ENCODE measurements at regions of chr2 and their contacts with region 1.

Region 1: DNA sequence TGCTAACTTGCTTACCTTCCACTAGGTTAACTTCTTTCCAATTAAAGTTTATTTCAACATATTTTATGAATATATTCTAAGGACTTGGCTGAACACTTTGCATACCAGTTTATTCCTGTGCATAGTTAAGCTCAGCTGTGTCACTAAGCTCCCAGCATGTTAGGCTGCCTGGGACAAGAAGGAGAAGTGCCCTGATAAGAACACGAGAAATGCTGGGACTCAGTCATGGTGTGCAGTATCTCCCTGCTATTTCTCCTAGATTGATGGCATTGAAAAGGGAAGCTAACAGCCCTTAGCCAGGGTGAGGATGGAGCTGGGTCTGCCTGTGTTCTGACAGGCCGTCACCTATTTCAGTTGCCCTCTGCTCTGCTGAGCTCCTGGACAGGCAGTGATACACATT is 164.3 kb downstream of the TRABD2A start:
- DNase-seq: no peak
- ATAC-seq: no peak
- H3K4me3 ChIP-seq: no peak overlapping the region
- H3K4me3 Mint-ChIP-seq: no peak overlapping the region
- H3K27ac ChIP-seq: no peak overlapping the region
- H3K27ac Mint-ChIP-seq: peak overlapping the region; percentile 68
- H3K4me1 ChIP-seq: peaks cover 23% of the 10 kb centered on the region
- H3K4me1 Mint-ChIP-seq: peaks cover 35% of the 10 kb centered on the region
- H3K27me3 ChIP-seq: no peaks in the 10 kb centered on the region
- H3K27me3 Mint-ChIP-seq: no peaks in the 10 kb centered on the region
- CTCF ChIP-seq: no peak

Region 2: GRCh38 chr2:84676295-84676694 is 40.3 kb before region 1 on chr2:
- CTCF ChIA-PET with region 1: interaction called, 3 read pairs
- POLR2A ChIA-PET with region 1: no interaction called
- intact Hi-C with region 1: loop called in 1 of 2 experiments (anchors 5 kb)
- DNase-seq: no peak
- ATAC-seq: no peak
- H3K4me3 ChIP-seq: no peak overlapping the region
- H3K4me3 Mint-ChIP-seq: no peak overlapping the region
- H3K27ac ChIP-seq: no peak overlapping the region
- H3K27ac Mint-ChIP-seq: no peak overlapping the region
- H3K4me1 ChIP-seq: peaks cover 20% of the 10 kb centered on the region
- H3K4me1 Mint-ChIP-seq: peaks cover 33% of the 10 kb centered on the region
- H3K27me3 ChIP-seq: no peaks in the 10 kb centered on the region
- H3K27me3 Mint-ChIP-seq: no peaks in the 10 kb centered on the region
- CTCF ChIP-seq: no peak

Region 3: GRCh38 chr2:84768840-84769239 is 52.3 kb after region 1 on chr2:
- CTCF ChIA-PET with region 1: no interaction called
- POLR2A ChIA-PET with region 1: no interaction called
- intact Hi-C with region 1: loop called in 1 of 2 experiments (anchors 5 kb)
- DNase-seq: no peak
- ATAC-seq: no peak
- H3K4me3 ChIP-seq: no peak overlapping the region
- H3K4me3 Mint-ChIP-seq: no peak overlapping the region
- H3K27ac ChIP-seq: no peak overlapping the region
- H3K27ac Mint-ChIP-seq: no peak overlapping the region
- H3K4me1 ChIP-seq: no peaks in the 10 kb centered on the region
- H3K4me1 Mint-ChIP-seq: peaks cover 3% of the 10 kb centered on the region
- H3K27me3 ChIP-seq: no peaks in the 10 kb centered on the region
- H3K27me3 Mint-ChIP-seq: no peaks in the 10 kb centered on the region
- CTCF ChIP-seq: no peak

Region 4: DNA sequence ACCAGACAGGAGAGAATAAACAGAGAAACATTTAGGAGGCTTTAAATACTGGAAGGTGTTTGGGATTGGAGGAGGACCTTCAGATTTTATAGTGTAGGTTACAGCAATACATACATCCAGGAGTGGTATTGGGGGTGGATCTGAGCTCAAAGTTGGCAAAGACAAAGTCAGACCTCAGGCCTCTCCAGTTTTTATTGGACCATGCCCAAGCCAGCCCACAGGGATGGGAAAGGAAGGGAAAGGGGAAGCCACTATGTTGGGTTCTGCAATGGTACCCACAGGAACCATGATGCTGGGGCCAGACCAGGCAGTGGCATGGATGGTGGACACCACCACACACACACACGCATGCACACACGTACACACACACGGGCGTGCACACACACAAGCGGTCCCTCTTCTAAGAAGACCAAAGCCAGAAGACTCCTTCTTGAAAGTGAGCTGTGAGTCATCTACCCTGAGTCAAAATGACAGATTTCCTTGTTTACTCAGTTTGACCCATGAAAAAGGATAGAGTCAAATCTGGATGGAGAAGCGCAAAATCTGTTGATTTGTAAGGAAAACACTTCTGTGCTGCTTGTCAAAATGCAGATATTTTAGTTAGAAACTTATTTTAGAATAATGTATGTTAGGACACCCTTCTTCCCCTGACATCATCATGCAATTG is 76.4 kb after region 1 on chr2:
- CTCF ChIA-PET with region 1: no interaction called
- POLR2A ChIA-PET with region 1: no interaction called
- intact Hi-C with region 1: no loop called
- DNase-seq: no peak
- ATAC-seq: no peak
- H3K4me3 ChIP-seq: no peak overlapping the region
- H3K4me3 Mint-ChIP-seq: no peak overlapping the region
- H3K27ac ChIP-seq: no peak overlapping the region
- H3K27ac Mint-ChIP-seq: no peak overlapping the region
- H3K4me1 ChIP-seq: no peaks in the 10 kb centered on the region
- H3K4me1 Mint-ChIP-seq: peaks cover 9% of the 10 kb centered on the region
- H3K27me3 ChIP-seq: no peaks in the 10 kb centered on the region
- H3K27me3 Mint-ChIP-seq: no peaks in the 10 kb centered on the region
- CTCF ChIP-seq: no peak